ENCODE measurements at regions of chr11 and their contacts with region 1.

Region 1: DNA sequence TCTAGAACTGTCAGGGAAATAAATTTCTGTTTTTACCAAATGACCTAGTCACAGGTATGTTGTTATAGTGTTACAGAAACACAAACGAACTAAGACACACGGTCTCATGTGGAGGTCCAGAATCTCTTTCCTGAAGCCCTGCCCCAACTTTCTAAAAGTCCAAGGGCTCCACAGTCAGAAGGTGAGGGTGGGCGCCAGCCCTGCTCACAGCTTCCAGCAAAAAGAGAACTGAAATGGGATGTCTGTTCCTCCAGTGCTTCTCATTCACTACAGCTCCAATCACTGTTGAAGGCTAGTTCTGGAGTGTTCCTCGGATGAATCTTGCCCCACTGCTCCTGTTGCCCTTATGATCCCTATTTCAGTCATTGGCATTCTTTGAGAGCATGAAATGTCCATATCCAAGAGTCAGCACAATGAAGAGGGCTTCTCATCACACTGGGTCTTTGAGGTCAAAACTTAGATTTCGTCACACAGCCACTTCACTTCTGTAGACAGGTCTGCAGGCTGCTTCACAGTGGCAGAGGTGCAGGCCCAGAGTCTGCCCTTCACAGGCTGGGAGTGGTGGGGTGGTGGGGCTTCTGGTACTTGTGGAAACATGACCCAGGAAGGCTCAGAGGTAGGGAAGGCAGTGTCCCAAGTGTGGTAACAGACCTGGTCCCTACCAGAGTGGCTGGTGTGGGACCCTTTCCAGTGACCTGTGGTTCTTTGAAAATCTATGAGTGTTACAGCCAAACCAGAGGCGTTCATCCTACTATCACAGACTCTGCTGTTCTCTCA is 34.9 kb downstream of the FAM181B start:
- DNase-seq: no peak
- H3K4me3 ChIP-seq: no peak overlapping the region
- H3K27ac ChIP-seq: no peak overlapping the region
- H3K4me1 ChIP-seq: no peaks in the 10 kb centered on the region
- H3K27me3 ChIP-seq: no peaks in the 10 kb centered on the region
- CTCF ChIP-seq: no peak

Region 2: DNA sequence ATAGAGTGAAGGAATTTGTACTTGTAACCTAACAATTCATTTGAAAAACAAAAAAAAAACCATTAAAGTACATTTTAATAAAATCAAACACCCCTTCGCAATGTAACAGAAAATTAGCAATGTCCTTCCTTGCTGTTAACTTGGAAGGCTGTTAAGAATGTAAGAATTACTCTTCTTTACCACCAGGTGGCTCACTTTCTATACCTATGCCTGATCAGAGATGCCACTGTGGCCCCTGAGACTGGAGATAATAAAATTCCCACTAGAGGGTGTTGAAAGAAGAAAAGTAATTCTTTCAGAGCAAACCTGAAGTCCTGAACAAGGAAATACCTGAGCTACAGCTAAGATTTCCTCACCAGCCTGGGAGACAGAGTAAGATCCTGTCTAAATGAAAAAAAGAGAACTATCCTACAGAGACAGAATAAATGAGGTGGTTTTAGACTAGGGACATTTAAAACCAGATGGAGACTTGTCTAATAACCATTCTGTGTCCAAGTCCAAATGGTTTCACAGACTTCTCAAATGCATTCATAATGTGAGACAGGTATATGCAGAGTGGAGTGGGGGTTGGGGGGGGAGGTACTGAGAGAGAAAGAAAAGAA is 1054.4 kb before region 1 on chr11:
- intact Hi-C with region 1: loop called (anchors 5 kb)
- DNase-seq: no peak
- H3K4me3 ChIP-seq: no peak overlapping the region
- H3K27ac ChIP-seq: no peak overlapping the region
- H3K4me1 ChIP-seq: no peaks in the 10 kb centered on the region
- H3K27me3 ChIP-seq: no peaks in the 10 kb centered on the region
- CTCF ChIP-seq: peak; percentile 64

Region 3: DNA sequence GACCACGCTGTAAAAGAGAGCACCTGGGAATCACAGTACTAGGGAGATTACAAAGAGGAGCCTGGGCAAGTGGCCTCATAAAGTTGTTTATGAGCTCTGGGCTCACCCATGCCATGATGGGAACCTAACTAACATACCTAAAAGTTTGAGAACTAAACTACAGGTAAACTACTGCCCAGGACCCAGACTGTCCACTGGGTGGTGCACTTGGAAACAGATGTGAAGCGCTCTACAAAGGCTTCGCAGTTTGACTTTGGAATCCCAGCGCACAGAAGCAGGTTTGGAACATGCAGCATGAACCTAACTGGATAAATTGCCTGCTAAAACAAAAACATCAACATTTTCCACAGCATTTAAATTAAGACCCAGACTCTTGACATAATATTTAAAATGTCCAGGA is 383.7 kb before region 1 on chr11:
- intact Hi-C with region 1: loop called (anchors 10 kb)
- DNase-seq: no peak
- H3K4me3 ChIP-seq: no peak overlapping the region
- H3K27ac ChIP-seq: no peak overlapping the region
- H3K4me1 ChIP-seq: no peaks in the 10 kb centered on the region
- H3K27me3 ChIP-seq: no peaks in the 10 kb centered on the region
- CTCF ChIP-seq: no peak

Region 4: DNA sequence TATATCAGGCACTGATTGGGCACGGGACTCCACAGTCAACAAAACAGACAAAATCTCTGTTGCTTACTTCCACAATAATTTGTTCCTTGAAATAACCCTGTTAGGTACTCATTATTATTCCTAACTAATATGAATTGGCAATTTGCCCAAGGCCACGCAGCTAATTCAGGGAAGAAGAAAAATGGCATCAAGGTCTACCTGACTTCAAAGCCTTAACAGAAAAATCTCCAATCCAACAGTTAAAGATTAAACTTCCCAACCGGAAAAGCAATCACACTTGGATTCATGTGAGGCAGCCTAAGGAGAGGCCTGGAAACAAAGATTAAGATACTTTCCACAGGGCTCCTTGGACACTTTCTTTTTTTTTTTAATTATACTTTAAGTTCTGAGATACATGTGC is 132.6 kb after region 1 on chr11:
- intact Hi-C with region 1: no loop called
- DNase-seq: no peak
- H3K4me3 ChIP-seq: no peak overlapping the region
- H3K27ac ChIP-seq: no peak overlapping the region
- H3K4me1 ChIP-seq: no peaks in the 10 kb centered on the region
- H3K27me3 ChIP-seq: no peaks in the 10 kb centered on the region
- CTCF ChIP-seq: no peak